ENCODE measurements at regions of chr11 and their contacts with region 1.

Region 1: DNA sequence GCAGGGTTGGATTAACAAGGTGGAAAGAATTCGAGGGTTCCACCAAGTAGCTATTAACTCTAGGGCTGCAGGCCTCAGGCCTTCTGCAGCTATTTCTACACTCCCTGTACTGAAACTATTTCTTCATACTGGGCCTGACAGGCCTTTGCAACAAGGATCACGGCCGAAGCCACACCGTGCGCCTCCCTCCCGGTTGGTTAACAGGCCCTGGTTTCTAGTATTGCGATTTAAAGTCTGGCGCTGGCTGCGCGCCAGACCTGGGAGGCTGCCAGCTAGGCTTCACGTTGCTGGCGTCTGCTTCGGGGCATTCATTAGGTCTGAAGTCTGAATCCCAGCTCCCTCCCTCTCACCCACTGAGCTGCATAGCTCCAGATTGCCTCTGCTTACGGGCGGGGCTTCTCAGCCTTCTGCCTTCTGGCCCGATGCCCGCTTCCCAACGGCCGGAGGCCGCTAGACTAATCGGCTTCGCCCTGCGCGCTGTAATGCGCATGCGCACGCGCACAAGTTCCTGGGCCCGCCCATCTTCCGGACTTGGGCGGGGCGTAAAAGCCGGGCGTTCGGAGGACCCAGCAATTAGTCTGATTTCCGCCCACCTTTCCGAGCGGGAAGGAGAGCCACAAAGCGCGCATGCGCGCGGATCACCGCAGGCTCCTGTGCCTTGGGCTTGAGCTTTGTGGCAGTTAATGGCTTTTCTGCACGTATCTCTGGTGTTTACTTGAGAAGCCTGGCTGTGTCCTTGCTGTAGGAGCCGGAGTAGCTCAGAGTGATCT is 1.6 kb downstream of the LDHA start:
- DNase-seq: peak; percentile 98 to 99
- H3K4me3 ChIP-seq: peak overlapping the region; percentile 90 to 97
- H3K27ac ChIP-seq: peak overlapping the region; percentile 97 to 99
- H3K4me1 ChIP-seq: peaks cover 0 to 45% (median 27%) of the 10 kb centered on the region in 4 donors
- H3K27me3 ChIP-seq: no peaks in the 10 kb centered on the region
- CTCF ChIP-seq: no peak

Region 2: DNA sequence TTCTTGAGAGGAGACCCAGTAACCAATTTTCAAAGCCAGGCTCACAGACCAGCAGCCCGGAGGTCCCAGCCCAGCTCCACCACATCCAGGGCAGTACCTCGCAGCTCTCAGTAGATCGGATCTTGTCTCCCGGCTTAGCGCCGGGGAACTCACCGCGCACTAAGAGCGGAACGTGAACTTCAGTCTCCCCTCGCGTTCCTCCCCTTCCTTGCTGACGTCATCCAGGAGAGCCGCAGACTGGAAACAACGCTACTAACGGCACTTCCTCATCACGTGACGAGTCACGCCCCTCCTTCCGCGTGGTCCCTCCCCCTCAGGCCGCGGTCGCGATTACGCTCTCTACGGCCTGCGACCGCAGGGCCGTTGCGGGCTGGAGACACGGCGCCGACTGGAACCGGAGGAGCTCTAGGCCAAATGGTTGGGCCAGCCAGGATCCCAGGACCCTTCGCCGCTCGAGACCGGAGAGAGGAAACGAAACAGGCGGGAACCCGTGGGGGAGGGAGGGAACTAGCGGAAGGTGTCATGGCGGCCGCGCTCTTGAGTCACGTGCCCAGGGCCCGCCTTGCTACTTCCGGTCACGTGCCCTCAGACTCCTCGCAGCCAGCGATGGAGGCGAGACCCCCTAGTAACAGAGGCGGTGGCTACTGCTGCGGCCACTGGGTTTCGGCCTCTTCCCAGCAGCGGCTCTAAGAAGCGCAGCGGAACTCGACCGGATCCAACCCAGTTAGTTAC is 73.8 kb before region 1 on chr11 and contains the starts of genes GTF2H1 and HPS5:
- intact Hi-C with region 1: loop called (anchors 5 kb)
- DNase-seq: peak; percentile 96 to 97
- H3K4me3 ChIP-seq: peak within 1 kb of the TSS; percentile 81 to 91
- H3K27ac ChIP-seq: peak within 1 kb of the TSS; percentile 94 to 97
- H3K4me1 ChIP-seq: peaks cover 0 to 61% (median 40%) of the 10 kb centered on the region in 4 donors
- H3K27me3 ChIP-seq: no peaks in the 10 kb centered on the region
- CTCF ChIP-seq: no peak